Activated CD4-positive, alpha-beta memory T cell treated with anti-CD3 and anti-CD28 coated beads for 36 hours (primary cell): ENCODE measurements at regions of chr5 and their contacts with region 1.

Region 1: DNA sequence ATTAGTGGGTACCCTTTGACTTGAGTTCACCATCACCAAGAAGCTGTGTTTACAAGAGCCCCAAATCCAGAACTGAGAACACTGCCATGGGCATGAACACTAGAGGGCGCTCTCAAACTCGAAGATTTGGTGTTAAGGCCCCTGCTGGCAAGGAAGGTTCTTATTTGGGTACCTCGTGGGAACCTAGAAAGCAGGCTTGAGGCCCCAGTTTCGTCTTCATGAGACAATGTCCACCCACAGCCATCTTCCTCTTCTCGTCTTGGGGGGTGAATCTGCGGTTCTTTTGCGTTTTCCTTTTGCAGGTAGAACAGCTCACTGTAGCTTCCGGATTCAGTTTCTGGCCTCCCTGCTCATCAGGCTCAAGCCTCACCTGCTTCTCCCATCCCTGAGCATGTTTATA is 184.0 kb downstream of the SEMA5A start:
- DNase-seq: peak; percentile 63
- H3K4me3 Mint-ChIP-seq: no peak overlapping the region
- H3K27ac Mint-ChIP-seq: no peak overlapping the region
- H3K4me1 Mint-ChIP-seq: peaks cover 19% of the 10 kb centered on the region
- H3K27me3 Mint-ChIP-seq: no peaks in the 10 kb centered on the region

Region 2: DNA sequence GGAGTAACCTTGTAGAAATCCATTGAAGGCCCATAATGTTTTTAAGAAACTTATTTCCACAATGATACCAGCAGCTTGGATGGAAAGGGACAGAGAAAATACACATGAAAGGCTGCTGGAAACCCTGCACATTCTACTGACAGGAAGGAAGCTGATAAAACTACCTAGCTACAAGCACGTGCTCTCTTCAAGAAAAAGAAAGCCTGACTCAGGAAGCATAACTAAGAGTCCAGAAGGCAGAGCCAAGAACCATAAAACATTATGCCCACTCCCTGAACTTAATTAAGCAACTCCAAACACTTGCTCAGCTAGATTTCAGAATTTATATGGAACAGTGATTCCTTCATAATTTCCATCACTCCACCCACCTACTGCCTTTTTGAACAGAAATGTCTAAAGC is 246.7 kb before region 1 on chr5:
- CTCF ChIA-PET with region 1: no interaction called
- POLR2A ChIA-PET with region 1: no interaction called
- intact Hi-C with region 1: no loop called
- DNase-seq: no peak
- H3K4me3 Mint-ChIP-seq: no peak overlapping the region
- H3K27ac Mint-ChIP-seq: no peak overlapping the region
- H3K4me1 Mint-ChIP-seq: no peaks in the 10 kb centered on the region
- H3K27me3 Mint-ChIP-seq: no peaks in the 10 kb centered on the region

Region 3: DNA sequence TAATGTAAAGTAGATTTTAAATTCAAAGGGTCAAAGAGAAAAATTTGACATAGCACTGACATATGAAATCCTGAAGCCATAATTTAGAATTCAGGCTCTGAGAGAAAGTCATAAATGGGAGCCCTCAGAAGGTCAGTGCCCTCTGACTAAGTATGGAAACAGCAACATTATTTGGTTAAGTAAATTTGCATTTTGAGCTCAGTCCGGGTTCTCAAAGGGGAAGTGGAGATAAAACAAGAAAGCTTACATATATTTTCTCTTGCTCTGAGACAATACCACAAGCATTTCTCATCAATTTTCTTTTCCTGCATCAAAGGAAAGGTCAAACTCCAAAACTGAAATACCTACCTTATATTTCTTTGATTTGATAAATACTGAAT is 164.0 kb before region 1 on chr5:
- CTCF ChIA-PET with region 1: no interaction called
- POLR2A ChIA-PET with region 1: no interaction called
- intact Hi-C with region 1: no loop called
- DNase-seq: no peak
- H3K4me3 Mint-ChIP-seq: no peak overlapping the region
- H3K27ac Mint-ChIP-seq: no peak overlapping the region
- H3K4me1 Mint-ChIP-seq: no peaks in the 10 kb centered on the region
- H3K27me3 Mint-ChIP-seq: no peaks in the 10 kb centered on the region

Region 4: DNA sequence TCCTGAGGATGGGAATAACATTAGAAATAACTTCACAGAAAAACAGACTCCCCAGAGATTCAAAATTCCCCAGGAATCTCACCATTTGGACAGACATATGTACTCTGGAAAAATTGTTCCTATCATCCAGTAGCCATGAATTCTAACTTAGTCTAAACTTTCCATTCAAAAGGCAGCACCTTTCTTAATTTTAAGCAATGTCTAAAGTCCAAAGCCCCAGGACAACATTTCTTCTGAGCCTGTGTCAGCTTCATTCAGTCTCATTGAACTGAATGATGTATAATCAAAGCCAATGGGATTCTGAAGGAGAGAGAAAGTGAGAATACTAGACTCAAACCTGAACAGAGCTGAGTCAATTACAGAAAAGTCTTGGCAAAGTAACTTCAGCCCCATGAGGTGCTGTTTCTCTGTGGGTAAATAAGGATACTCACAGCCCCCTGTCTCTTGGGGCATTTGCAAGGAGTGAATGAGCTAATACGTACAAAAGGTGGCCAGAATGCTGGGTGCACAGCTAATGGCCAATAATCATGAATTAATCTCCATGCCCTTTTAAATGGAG is 43.4 kb after region 1 on chr5:
- CTCF ChIA-PET with region 1: no interaction called
- POLR2A ChIA-PET with region 1: no interaction called
- intact Hi-C with region 1: loop called (anchors 1 kb)
- DNase-seq: no peak
- H3K4me3 Mint-ChIP-seq: no peak overlapping the region
- H3K27ac Mint-ChIP-seq: no peak overlapping the region
- H3K4me1 Mint-ChIP-seq: peaks cover 2% of the 10 kb centered on the region
- H3K27me3 Mint-ChIP-seq: no peaks in the 10 kb centered on the region

Region 5: GRCh38 chr5:9498541-9499497 is 137.0 kb after region 1 on chr5:
- CTCF ChIA-PET with region 1: no interaction called
- POLR2A ChIA-PET with region 1: no interaction called
- intact Hi-C with region 1: loop called (anchors 2 kb)
- DNase-seq: peak; percentile 16
- H3K4me3 Mint-ChIP-seq: no peak overlapping the region
- H3K27ac Mint-ChIP-seq: no peak overlapping the region
- H3K4me1 Mint-ChIP-seq: no peaks in the 10 kb centered on the region
- H3K27me3 Mint-ChIP-seq: no peaks in the 10 kb centered on the region

Region 6: DNA sequence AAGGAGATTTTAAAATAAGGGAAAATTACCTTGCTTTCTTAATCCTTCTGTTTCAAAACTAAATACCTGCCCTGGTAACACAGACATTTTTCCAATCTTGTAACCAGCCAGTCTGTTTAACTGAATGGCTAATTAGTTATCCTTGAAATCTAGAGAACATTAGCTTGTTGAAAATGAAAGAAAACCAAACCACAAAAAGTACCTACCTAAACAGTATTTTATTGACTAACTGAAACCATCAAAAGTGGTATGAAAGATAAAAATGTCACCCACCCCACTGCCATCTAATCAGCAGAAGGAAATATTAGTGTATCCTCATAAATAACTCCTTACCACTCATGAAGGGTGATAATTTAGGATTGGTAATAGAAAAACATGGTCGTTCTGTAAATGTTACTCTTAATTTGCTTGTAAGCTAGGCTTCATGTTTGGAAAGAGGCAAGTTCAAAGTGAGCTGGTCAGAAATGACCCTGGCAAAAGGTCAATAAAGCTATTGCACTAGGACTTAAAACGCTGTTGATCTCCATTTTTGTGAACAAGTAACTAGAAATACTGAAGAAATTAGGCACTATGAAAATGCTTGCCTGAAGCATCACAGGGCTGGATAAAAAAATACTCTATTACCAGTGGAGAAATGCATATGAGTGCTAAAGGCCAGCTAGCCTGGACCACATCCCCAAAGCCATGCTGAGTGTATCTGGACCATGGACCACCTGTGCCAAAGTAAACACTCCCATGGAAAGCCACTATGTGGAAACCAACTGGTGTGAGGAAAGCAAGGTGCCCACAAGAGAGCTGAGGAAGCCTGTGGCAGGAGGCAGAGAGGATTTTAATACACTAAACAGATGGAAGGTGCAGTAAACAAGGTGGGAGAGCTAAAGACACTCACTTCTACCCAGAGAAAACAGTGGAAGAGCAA is 175.6 kb after region 1 on chr5:
- CTCF ChIA-PET with region 1: interaction called, 3 read pairs
- POLR2A ChIA-PET with region 1: no interaction called
- intact Hi-C with region 1: loop called (anchors 2 kb)
- DNase-seq: no peak
- H3K4me3 Mint-ChIP-seq: no peak overlapping the region
- H3K27ac Mint-ChIP-seq: no peak overlapping the region
- H3K4me1 Mint-ChIP-seq: peaks cover 4% of the 10 kb centered on the region
- H3K27me3 Mint-ChIP-seq: no peaks in the 10 kb centered on the region

Region 7: GRCh38 chr5:9544502-9545135 is 182.8 kb after region 1 on chr5:
- CTCF ChIA-PET with region 1: interaction called, 11 read pairs
- POLR2A ChIA-PET with region 1: no interaction called
- intact Hi-C with region 1: loop called (anchors 1 kb)
- DNase-seq: peak; percentile 69
- H3K4me3 Mint-ChIP-seq: peak overlapping the region; percentile 71
- H3K27ac Mint-ChIP-seq: no peak overlapping the region
- H3K4me1 Mint-ChIP-seq: peaks cover 7% of the 10 kb centered on the region
- H3K27me3 Mint-ChIP-seq: peaks cover 13% of the 10 kb centered on the region

Region 8: GRCh38 chr5:10249948-10250803 is 888.3 kb after region 1 on chr5 and contains the start of gene CCT5:
- CTCF ChIA-PET with region 1: no interaction called
- POLR2A ChIA-PET with region 1: no interaction called
- intact Hi-C with region 1: loop called (anchors 10 kb)
- DNase-seq: peak; percentile 93
- H3K4me3 Mint-ChIP-seq: peak within 1 kb of the TSS; percentile 84
- H3K27ac Mint-ChIP-seq: peak within 1 kb of the TSS; percentile 99
- H3K4me1 Mint-ChIP-seq: peaks cover 47% of the 10 kb centered on the region
- H3K27me3 Mint-ChIP-seq: no peaks in the 10 kb centered on the region
- total RNA-seq, gene CCT5: 360 to 375 TPM